ENCODE measurements at regions of chr12 and their contacts with region 1.

Region 1: GRCh38 chr12:130266751-130267150 is 70.9 kb upstream of the PIWIL1 start:
- DNase-seq: peak; percentile 41
- ATAC-seq: peak; percentile 61; the same call in 1 of the 2 replicates
- H3K4me3 Mint-ChIP-seq: no peak overlapping the region
- H3K27ac Mint-ChIP-seq: no peak overlapping the region
- H3K4me1 Mint-ChIP-seq: no peaks in the 10 kb centered on the region
- H3K27me3 Mint-ChIP-seq: peaks cover 11% of the 10 kb centered on the region
- CTCF ChIP-seq: no peak

Region 2: GRCh38 chr12:130281153-130281799 is 14.5 kb after region 1 on chr12:
- CTCF ChIA-PET with region 1: interaction called, 10 read pairs
- POLR2A ChIA-PET with region 1: no interaction called
- DNase-seq: peak; percentile 68
- ATAC-seq: peak; percentile 97
- H3K4me3 Mint-ChIP-seq: no peak overlapping the region
- H3K27ac Mint-ChIP-seq: no peak overlapping the region
- H3K4me1 Mint-ChIP-seq: no peaks in the 10 kb centered on the region
- H3K27me3 Mint-ChIP-seq: peaks cover 13% of the 10 kb centered on the region
- CTCF ChIP-seq: peak; percentile 57

Measured in WTC11 (cell line).